GM12878 (cell line): ENCODE measurements at regions of chr1 and their contacts with region 1.

Region 1: GRCh38 chr1:63828322-63829044 is 54.7 kb downstream of the ROR1 start:
- DNase-seq: no peak
- ATAC-seq: peak; percentile 82
- H3K4me3 ChIP-seq: no peak overlapping the region
- H3K27ac ChIP-seq: no peak overlapping the region
- H3K4me1 ChIP-seq: peaks cover 4% of the 10 kb centered on the region; the same call in 1 of the 2 replicates
- H3K27me3 ChIP-seq: no peaks in the 10 kb centered on the region
- CTCF ChIP-seq: no peak
- EP300 ChIP-seq: no peak
- POLR2A ChIP-seq: no peak
- RAD21 ChIP-seq: no peak

Region 2: GRCh38 chr1:63813829-63814277 is 14.6 kb before region 1 on chr1:
- CTCF ChIA-PET with region 1: interaction called, 9 read pairs
- POLR2A ChIA-PET with region 1: interaction called, 7 read pairs
- RAD21 ChIA-PET with region 1: interaction called, 11 read pairs
- SMC1A ChIA-PET with region 1: interaction called, 36 read pairs
- in situ Hi-C with region 1: no loop called
- intact Hi-C with region 1: no loop called
- DNase-seq: no peak
- ATAC-seq: peak; percentile 35; the same call in 2 of the 3 replicates
- H3K4me3 ChIP-seq: no peak overlapping the region
- H3K27ac ChIP-seq: no peak overlapping the region
- H3K4me1 ChIP-seq: no peaks in the 10 kb centered on the region
- H3K27me3 ChIP-seq: no peaks in the 10 kb centered on the region
- CTCF ChIP-seq: no peak
- EP300 ChIP-seq: peak in 1 of 2 experiments; percentile 63; a peak in 2 of 4 replicates
- POLR2A ChIP-seq: no peak
- RAD21 ChIP-seq: no peak